Spleen (tissue), 13 donors: ENCODE measurements at regions of chr3 and their contacts with region 1.

Region 1: GRCh38 chr3:128680602-128681368 is 30.2 kb upstream of the RPN1 start:
- DNase-seq: peak; percentile 100
- H3K4me3 ChIP-seq: peak overlapping the region; percentile 38 to 83 (median 58)
- H3K27ac ChIP-seq: peak overlapping the region; percentile 96 to 99 (median 98)
- H3K4me1 ChIP-seq: peaks cover 0 to 54% (median 26%) of the 10 kb centered on the region in 6 donors
- H3K27me3 ChIP-seq: no peaks in the 10 kb centered on the region
- CTCF ChIP-seq: peak; percentile 97 to 100 (median 99)
- POLR2A ChIP-seq: peak; percentile 52 to 88 (median 84)

Region 2: GRCh38 chr3:128804017-128804810 is 123.4 kb after region 1 on chr3:
- intact Hi-C with region 1: loop called (anchors 5 kb)
- DNase-seq: no peak
- H3K4me3 ChIP-seq: peak overlapping the region in 6 of 8 donors; percentile 2 to 60 (median 24)
- H3K27ac ChIP-seq: peak overlapping the region; percentile 55 to 85 (median 82)
- H3K4me1 ChIP-seq: peaks cover 14 to 94% (median 55%) of the 10 kb centered on the region in 6 donors
- H3K27me3 ChIP-seq: no peaks in the 10 kb centered on the region
- CTCF ChIP-seq: no peak
- POLR2A ChIP-seq: no peak

Region 3: GRCh38 chr3:128845778-128846485 is 165.1 kb after region 1 on chr3:
- intact Hi-C with region 1: loop called (anchors 5 kb)
- DNase-seq: peak; percentile 95
- H3K4me3 ChIP-seq: peak overlapping the region; percentile 39 to 69 (median 50)
- H3K27ac ChIP-seq: peak overlapping the region in 7 of 8 donors; percentile 14 to 81 (median 66)
- H3K4me1 ChIP-seq: peaks cover 6 to 37% (median 20%) of the 10 kb centered on the region in 6 donors
- H3K27me3 ChIP-seq: no peaks in the 10 kb centered on the region
- CTCF ChIP-seq: peak in 10 of 11 experiments; percentile 47 to 86 (median 71)
- POLR2A ChIP-seq: no peak